Vagina (tissue), 2 donors: ENCODE measurements at regions of chr22 and their contacts with region 1.

Region 1: DNA sequence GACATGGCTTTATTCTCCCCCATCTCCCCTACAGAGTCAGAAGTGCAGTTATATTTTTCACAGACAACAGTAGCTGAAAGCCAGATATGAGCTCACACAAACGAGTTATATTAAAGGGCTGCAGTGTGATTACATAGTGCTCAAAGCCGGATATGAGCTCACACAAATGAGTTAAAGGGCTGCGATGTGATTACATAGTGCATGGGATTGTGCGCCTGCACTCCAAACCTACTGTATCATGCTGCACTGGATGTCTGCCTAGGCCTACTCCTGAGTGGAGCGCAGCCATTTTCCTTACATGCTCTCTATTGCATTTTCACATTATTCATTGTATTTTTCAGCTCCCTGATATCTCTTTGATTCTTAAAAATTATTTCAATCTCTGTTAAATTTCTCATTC is 414.6 kb upstream of the LARGE1 start:
- DNase-seq: no peak
- H3K4me3 ChIP-seq: no peak overlapping the region
- H3K27ac ChIP-seq: no peak overlapping the region
- H3K4me1 ChIP-seq: no peaks in the 10 kb centered on the region
- H3K27me3 ChIP-seq: no peaks in the 10 kb centered on the region
- CTCF ChIP-seq: no peak
- POLR2A ChIP-seq: no peak

Region 2: GRCh38 chr22:34829485-34829884 is 494.6 kb after region 1 on chr22:
- intact Hi-C with region 1: loop called (anchors 5 kb)
- DNase-seq: no peak
- H3K4me3 ChIP-seq: no peak overlapping the region
- H3K27ac ChIP-seq: no peak overlapping the region
- H3K4me1 ChIP-seq: no peaks in the 10 kb centered on the region
- H3K27me3 ChIP-seq: no peaks in the 10 kb centered on the region
- CTCF ChIP-seq: no peak
- POLR2A ChIP-seq: no peak